ENCODE measurements at regions of chr2 and their contacts with region 1.

Region 1: DNA sequence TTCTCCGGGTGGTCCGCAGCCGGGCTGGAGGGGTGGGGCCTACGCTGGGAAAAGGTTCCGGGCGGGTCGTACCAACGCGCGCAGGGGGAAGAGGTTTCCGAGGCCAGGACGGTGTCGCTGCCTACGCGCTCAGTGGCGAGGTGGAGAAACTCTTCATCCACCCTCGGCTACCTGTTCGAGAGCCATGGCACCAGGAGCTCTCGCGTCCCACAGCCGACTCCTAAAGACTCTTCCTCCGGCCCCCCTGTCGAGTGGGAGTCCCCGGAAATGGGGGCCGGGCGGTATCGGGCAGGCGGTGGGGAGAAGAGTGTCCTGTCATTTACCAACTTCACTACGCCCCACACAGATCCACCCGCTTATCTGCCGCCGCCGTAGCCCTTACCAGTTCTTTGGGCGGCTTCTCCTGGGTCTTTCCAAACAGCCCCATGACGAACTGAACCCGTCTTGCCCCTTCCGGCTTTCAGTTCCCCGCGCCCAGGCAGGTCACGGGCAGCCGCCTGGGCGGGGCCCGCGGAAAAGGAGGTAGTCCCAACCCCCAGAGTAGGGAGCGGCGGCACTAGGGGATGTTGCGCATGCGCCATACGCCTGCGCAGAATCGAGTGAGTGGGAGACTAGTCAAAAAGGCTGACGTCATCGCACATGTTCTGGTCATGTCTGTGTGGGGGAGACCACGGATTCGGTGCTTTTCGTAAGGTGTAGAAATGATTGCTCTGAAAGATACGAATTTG is at the start of gene CHMP3:
- DNase-seq: peak; percentile 92 to 98 (median 98)
- ATAC-seq: peak; percentile 84 to 85
- H3K4me3 Mint-ChIP-seq: peak within 1 kb of the TSS; percentile 90 to 98 (median 96)
- H3K27ac Mint-ChIP-seq: peak within 1 kb of the TSS; percentile 95 to 100 (median 99)
- H3K4me1 Mint-ChIP-seq: peaks cover 23 to 37% (median 28%) of the 10 kb centered on the region in 4 donors
- H3K27me3 Mint-ChIP-seq: peaks cover 0 to 7% (median 0%) of the 10 kb centered on the region in 5 donors
- polyA plus RNA-seq, gene CHMP3: 68.5 to 70.9 (median 70.6) TPM

Region 2: GRCh38 chr2:86552889-86553288 is 10.2 kb before region 1 on chr2:
- POLR2A ChIA-PET with region 1: interaction called, 50 read pairs
- DNase-seq: peak in 9 of 10 donors; percentile 22 to 78 (median 46)
- ATAC-seq: peak; percentile 93 to 95
- H3K4me3 Mint-ChIP-seq: peak overlapping the region; percentile 64 to 92 (median 86)
- H3K27ac Mint-ChIP-seq: peak overlapping the region in 9 of 10 donors; percentile 72 to 98 (median 96)
- H3K4me1 Mint-ChIP-seq: peaks cover 9 to 52% (median 32%) of the 10 kb centered on the region in 4 donors
- H3K27me3 Mint-ChIP-seq: no peaks in the 10 kb centered on the region

Region 3: GRCh38 chr2:86623651-86624541 is 60.8 kb after region 1 on chr2 and contains the start of gene RNF103:
- POLR2A ChIA-PET with region 1: interaction called, 31 read pairs
- DNase-seq: peak; percentile 86 to 94 (median 88)
- ATAC-seq: peak; percentile 83 to 87
- H3K4me3 Mint-ChIP-seq: peak within 1 kb of the TSS; percentile 85 to 95 (median 92)
- H3K27ac Mint-ChIP-seq: peak within 1 kb of the TSS; percentile 88 to 96 (median 96)
- H3K4me1 Mint-ChIP-seq: peaks cover 10 to 40% (median 32%) of the 10 kb centered on the region in 4 donors
- H3K27me3 Mint-ChIP-seq: peaks cover 0 to 1% (median 0%) of the 10 kb centered on the region in 5 donors
- polyA plus RNA-seq, gene RNF103: 0.77 to 4.4 (median 2.4) TPM